ENCODE measurements at regions of chr5 and their contacts with region 1.

Region 1: GRCh38 chr5:54492178-54492577 is 25.4 kb upstream of the SNX18 start:
- DNase-seq: no peak
- ATAC-seq: peak in 1 of 4 donors; percentile 27
- H3K4me3 ChIP-seq: no peak overlapping the region
- H3K27ac ChIP-seq: no peak overlapping the region
- H3K4me1 ChIP-seq: peaks cover 0 to 7% (median 0%) of the 10 kb centered on the region in 12 donors
- H3K27me3 ChIP-seq: no peaks in the 10 kb centered on the region
- CTCF ChIP-seq: no peak
- POLR2A ChIP-seq: no peak

Region 2: DNA sequence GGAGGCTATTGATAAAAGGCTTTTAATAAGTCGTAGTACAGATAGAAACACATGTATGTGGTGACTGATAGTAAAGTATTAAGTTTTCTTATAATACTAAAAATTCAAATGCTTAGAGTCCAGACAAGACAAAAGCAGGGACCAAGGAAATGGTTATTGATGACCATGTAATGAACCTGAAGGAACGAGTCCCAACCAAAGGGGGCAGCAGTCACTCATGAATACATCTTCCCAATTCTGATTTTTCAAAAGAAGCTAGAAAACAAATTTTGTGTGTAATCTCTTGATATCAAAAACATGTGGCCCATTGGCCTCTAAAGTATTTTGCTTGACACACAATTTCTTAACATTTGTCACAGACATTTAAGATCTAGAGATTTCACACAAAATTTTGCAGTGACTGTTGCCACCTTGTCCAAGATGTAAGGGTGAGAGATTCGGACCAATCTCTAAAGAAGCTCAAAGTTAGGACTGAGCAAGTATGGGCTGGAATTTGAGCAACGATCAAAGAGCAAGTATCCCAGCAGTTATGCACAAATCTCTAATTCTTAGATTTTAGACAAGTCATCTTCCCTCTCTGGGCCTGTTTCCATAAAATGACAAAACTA is 248.6 kb before region 1 on chr5:
- intact Hi-C with region 1: loop called in 3 of 10 experiments (anchors 5 kb)
- DNase-seq: peak in 1 of 5 donors; percentile 15
- ATAC-seq: peak in 1 of 4 donors; percentile 47
- H3K4me3 ChIP-seq: no peak overlapping the region
- H3K27ac ChIP-seq: peak overlapping the region in 1 of 12 donors; percentile 6
- H3K4me1 ChIP-seq: peaks cover 0 to 41% (median 8%) of the 10 kb centered on the region in 12 donors
- H3K27me3 ChIP-seq: no peaks in the 10 kb centered on the region
- CTCF ChIP-seq: peak; percentile 37 to 75 (median 65)
- POLR2A ChIP-seq: no peak

Region 3: DNA sequence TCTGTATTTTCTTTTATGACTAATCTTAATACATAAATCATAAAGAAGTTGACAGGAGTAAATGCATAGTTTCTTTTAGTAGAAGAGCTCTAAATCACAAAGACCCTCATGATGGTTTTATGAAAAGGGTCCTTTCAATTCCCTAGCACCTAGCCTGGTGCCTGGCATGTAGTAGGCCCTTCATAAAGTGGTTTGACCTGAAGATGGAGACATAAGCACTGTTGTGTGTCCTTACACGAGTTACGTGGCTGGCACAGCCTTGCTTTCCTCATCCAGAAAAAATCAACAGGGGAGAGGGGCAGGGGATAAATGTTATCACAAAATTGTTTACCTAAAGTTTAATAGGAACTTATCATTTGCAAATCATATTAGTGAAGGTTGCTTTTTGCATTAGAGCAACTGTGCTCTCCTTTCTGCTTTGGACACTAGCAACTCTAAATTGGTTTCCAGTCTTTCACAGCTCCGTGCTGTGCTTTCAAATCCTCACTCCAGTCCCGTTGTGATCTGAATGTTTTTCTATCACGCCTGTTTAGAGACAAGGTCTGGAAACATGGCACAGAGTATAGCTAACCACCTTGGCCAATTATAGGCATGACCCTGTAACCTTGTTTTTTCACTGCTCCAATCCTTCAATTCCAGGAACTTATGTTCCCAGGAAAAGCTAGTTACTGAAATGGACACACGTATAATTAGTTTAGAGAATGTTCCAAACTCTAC is 237.5 kb before region 1 on chr5:
- intact Hi-C with region 1: loop called in 7 of 10 experiments (anchors 2 to 5 kb)
- DNase-seq: peak in 2 of 5 donors; percentile 31 to 38
- ATAC-seq: peak; percentile 78 to 91 (median 88)
- H3K4me3 ChIP-seq: peak overlapping the region in 9 of 12 donors; percentile 17 to 38 (median 27)
- H3K27ac ChIP-seq: peak overlapping the region; percentile 15 to 73 (median 42)
- H3K4me1 ChIP-seq: peaks cover 0 to 60% (median 25%) of the 10 kb centered on the region in 12 donors
- H3K27me3 ChIP-seq: no peaks in the 10 kb centered on the region
- CTCF ChIP-seq: peak in 11 of 12 donors; percentile 7 to 67 (median 50)
- POLR2A ChIP-seq: no peak

Region 4: DNA sequence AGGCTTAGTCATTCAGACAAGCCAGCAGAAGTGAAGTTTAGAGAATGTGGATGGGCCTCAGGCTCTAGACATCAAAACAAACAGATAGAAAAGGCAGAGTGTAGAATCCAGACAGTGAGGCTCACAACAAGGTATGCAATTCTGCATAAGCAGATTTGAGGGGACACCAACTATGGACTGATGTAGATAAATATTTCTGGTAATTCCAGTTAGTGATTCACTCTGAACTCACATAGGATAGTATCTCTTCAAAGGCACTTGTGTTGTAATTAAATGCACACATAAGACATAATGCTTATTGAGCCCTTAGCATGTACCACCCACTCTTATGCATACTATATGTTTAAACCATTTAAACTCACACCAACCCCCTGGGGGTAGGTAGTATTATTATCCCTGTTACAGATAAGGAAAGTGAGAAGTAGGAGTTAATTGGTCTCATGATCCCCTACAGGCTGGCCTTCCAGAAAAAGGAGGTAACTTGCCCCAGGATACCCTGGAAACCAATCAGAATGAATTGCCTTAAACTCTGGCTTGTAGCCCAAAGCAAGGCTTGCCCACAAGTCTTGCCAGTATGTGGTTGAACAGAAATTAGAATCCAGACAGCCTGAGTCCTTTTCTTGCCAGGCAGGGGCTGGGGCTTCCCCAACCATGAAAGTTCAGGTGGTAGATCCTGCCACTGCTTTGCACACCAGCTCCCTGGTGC is 76.1 kb before region 1 on chr5:
- intact Hi-C with region 1: loop called in 2 of 10 experiments (anchors 2 to 5 kb)
- DNase-seq: no peak
- ATAC-seq: no peak
- H3K4me3 ChIP-seq: no peak overlapping the region
- H3K27ac ChIP-seq: no peak overlapping the region
- H3K4me1 ChIP-seq: peaks cover 0 to 8% (median 0%) of the 10 kb centered on the region in 12 donors
- H3K27me3 ChIP-seq: no peaks in the 10 kb centered on the region
- CTCF ChIP-seq: no peak
- POLR2A ChIP-seq: no peak

Region 5: GRCh38 chr5:54443270-54443669 is 48.9 kb before region 1 on chr5:
- intact Hi-C with region 1: loop called in 4 of 10 experiments (anchors 5 to 10 kb)
- DNase-seq: no peak
- ATAC-seq: no peak
- H3K4me3 ChIP-seq: no peak overlapping the region
- H3K27ac ChIP-seq: no peak overlapping the region
- H3K4me1 ChIP-seq: peaks cover 0 to 30% (median 11%) of the 10 kb centered on the region in 12 donors
- H3K27me3 ChIP-seq: no peaks in the 10 kb centered on the region
- CTCF ChIP-seq: peak in 8 of 12 donors; percentile 23 to 55 (median 40)
- POLR2A ChIP-seq: no peak

Measured in heart left ventricle (tissue), 16 donors.